Activated CD4-positive, alpha-beta T cell treated with anti-CD3 and anti-CD28 coated beads, Interleukin-2, amount 10 ng/mL, durations not matched to agents 24 days and 14 days (primary cell): ENCODE measurements at regions of chr15 and their contacts with region 1.

Region 1: GRCh38 chr15:63157118-63157843 is at the start of gene RPS27L:
- DNase-seq: peak; percentile 97
- H3K4me3 Mint-ChIP-seq: peak within 1 kb of the TSS; percentile 100
- H3K27ac Mint-ChIP-seq: peak within 1 kb of the TSS; percentile 100
- H3K4me1 Mint-ChIP-seq: peaks cover 16% of the 10 kb centered on the region
- H3K27me3 Mint-ChIP-seq: no peaks in the 10 kb centered on the region
- total RNA-seq, gene RPS27L: 167 and 179 TPM in 2 replicates

Region 2: DNA sequence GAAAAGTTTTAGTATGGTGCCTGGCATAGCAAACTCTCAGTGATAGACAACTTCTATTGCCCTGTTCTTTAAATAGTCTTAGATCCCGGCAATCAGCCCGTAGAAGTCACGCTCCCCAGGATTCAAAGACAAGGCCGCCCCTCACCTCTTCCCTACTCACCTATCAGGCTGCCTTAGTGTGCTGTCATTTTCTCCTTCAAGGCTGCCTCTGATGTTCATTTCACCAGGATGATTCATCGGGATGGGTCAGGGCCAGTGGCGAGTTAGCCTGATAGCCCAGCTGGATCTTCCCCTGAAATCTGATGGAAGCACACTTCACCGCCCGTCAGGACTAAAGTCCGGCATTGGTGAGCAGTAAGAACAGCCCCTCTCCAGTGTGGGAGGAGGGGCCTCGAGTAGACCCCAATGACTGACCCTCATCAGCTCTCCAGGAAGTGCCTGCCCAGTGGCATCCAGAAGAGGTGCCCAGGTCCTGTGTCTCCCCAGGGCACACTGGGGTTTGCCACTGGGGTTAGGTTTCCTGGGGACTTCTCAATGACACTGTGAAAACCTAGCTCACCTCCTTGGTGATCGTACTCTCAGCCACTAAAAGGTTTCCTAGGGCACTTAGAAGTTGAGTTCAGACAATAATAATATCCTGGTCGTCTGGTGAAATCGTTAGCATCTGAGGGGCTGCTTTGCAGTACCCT is 77.2 kb before region 1 on chr15:
- intact Hi-C with region 1: no loop called
- DNase-seq: no peak
- H3K4me3 Mint-ChIP-seq: no peak overlapping the region
- H3K27ac Mint-ChIP-seq: no peak overlapping the region
- H3K4me1 Mint-ChIP-seq: peaks cover 7% of the 10 kb centered on the region
- H3K27me3 Mint-ChIP-seq: peaks cover 13% of the 10 kb centered on the region

Region 3: DNA sequence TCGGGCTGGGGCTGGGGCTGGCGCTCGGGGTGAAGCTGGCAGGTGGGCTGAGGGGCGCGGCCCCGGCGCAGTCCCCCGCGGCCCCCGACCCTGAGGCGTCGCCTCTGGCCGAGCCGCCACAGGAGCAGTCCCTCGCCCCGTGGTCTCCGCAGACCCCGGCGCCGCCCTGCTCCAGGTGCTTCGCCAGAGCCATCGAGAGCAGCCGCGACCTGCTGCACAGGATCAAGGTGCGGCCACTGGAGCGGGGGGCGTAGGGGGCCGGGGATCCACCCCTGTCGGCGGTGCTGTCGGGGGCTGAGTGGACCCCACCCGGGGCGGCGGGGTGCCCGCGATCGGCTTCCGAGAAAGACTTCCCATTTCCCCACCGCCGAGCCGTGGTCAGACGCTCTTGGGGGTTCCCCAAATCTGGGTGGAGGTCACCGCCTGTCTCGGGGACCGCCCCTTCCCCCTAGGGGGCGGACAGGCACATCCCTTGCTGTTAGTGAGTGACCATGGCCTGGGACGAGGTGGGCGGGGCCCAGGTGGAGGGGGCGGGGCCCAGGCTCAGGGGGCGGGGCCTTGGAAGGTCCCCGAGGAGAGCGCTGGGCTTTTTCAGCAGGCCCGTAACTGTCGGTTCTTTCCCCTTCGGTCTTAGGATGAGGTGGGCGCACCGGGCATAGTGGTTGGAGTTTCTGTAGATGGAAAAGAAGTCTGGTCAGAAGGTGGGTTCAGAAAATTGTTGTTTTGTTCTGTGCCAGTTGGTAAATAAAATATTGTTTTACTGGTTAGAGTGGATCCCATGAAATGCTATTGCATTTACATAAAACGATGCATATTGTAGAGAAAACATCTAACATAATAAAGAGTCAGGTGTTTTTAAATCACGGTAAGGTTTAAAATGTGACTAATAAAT is 35.0 kb before region 1 on chr15:
- intact Hi-C with region 1: loop called (anchors 1 kb)
- DNase-seq: peak; percentile 95
- H3K4me3 Mint-ChIP-seq: peak overlapping the region; percentile 94
- H3K27ac Mint-ChIP-seq: peak overlapping the region; percentile 85
- H3K4me1 Mint-ChIP-seq: peaks cover 8% of the 10 kb centered on the region
- H3K27me3 Mint-ChIP-seq: no peaks in the 10 kb centered on the region

Region 4: GRCh38 chr15:63172376-63173109 is 15.3 kb after region 1 on chr15:
- intact Hi-C with region 1: loop called (anchors 1 kb)
- DNase-seq: no peak
- H3K4me3 Mint-ChIP-seq: no peak overlapping the region
- H3K27ac Mint-ChIP-seq: no peak overlapping the region
- H3K4me1 Mint-ChIP-seq: peaks cover 3% of the 10 kb centered on the region
- H3K27me3 Mint-ChIP-seq: no peaks in the 10 kb centered on the region

Region 5: DNA sequence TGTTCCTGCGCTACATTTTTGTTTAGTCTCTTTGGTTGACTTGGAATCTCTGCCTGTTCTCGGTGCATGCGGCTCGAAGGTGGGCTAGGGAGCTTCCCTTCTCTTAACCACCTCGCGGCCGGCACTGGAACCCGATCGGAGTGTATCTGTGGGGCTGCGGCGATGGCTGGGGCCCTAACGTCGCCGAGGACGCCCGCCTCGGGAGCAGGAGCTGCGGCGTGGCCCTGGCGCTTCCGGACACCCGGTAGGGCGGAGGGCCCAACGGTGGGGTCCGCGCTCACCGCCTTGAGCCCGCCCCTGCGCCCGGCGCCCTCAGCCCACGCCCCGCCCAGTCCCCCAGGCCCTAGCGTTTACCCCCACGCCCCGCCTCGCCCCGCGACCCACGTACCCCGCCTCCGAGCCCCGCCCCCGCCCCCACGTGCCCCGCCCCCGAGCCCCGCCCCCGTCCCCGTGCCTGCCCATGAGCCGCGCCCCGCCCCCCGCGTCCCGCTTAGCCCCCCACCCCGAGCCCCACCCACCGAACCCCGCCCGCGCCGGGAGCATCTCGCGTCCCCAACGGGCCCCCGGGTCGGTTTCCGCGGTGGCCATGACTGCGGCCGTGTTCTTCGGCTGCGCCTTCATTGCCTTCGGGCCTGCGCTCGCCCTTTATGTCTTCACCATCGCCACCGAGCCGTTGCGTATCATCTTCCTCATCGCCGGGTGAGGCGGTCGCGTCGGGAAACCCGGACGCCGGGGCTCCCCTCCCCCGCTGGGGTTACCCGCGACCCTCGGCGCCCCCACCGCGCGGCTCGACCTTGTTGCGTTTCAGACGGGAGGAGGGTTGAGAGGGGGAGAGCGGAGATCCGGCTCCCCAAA is 120.0 kb after region 1 on chr15 and contains the start of gene APH1B:
- intact Hi-C with region 1: loop called (anchors 5 kb)
- DNase-seq: peak; percentile 95
- H3K4me3 Mint-ChIP-seq: peak within 1 kb of the TSS; percentile 93
- H3K27ac Mint-ChIP-seq: peak within 1 kb of the TSS; percentile 89
- H3K4me1 Mint-ChIP-seq: peaks cover 30% of the 10 kb centered on the region
- H3K27me3 Mint-ChIP-seq: no peaks in the 10 kb centered on the region
- total RNA-seq, gene APH1B: 3.7 and 3.8 TPM in 2 replicates

Region 6: DNA sequence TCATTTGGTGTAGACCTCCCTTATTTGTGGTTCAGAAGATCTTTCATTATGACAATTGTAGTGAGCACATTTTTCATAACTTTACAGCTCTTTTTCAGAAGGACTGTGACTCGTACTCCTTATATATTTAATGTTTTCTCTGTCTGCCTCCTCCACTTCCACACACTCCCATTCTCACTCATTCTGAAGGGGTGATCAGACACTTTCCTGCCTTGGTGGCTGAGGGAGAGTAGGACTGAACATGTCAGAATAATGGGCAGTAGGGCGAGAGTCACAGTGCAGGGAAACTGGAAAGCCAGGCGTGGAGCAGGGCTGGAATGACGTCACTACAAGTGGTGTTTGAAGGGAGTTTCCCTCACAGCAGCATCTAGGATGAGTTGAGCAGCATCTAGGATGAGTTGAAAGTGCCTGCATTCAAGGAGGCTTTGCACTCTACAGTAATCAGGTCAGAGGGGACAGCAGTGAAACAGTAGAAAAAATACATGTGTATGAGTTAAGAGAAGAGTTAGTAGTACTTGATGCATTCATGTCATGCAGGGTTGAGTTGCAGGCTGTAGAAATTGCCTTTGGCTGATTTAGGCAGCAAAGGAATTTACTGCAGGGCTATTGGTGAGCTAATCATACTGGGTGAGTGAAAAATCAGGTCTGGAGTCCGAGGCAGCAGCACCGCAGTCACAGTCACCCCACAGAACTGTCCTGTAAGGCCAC is 403.6 kb after region 1 on chr15:
- intact Hi-C with region 1: no loop called
- DNase-seq: no peak
- H3K4me3 Mint-ChIP-seq: no peak overlapping the region
- H3K27ac Mint-ChIP-seq: peak overlapping the region; percentile 46
- H3K4me1 Mint-ChIP-seq: peaks cover 18% of the 10 kb centered on the region
- H3K27me3 Mint-ChIP-seq: no peaks in the 10 kb centered on the region